ENCODE measurements at regions of chr13 and their contacts with region 1.

Region 1: GRCh38 chr13:43085545-43085944 is 62.2 kb downstream of the DNAJC15 start:
- DNase-seq: peak; percentile 67
- ATAC-seq: peak; percentile 49; the same call in 1 of the 2 replicates
- H3K4me3 ChIP-seq: no peak overlapping the region
- H3K27ac ChIP-seq: no peak overlapping the region
- H3K4me1 ChIP-seq: peaks cover 5% of the 10 kb centered on the region; the same call in 1 of the 2 replicates
- H3K27me3 ChIP-seq: no peaks in the 10 kb centered on the region
- CTCF ChIP-seq: peak; percentile 62

Region 2: GRCh38 chr13:42660333-42660965 is 425.1 kb before region 1 on chr13:
- CTCF ChIA-PET with region 1: no interaction called
- POLR2A ChIA-PET with region 1: no interaction called
- intact Hi-C with region 1: loop called (anchors 10 kb)
- DNase-seq: peak; percentile 26
- ATAC-seq: peak; percentile 50; the same call in 1 of the 2 replicates
- H3K4me3 ChIP-seq: no peak overlapping the region
- H3K27ac ChIP-seq: no peak overlapping the region
- H3K4me1 ChIP-seq: no peaks in the 10 kb centered on the region
- H3K27me3 ChIP-seq: no peaks in the 10 kb centered on the region
- CTCF ChIP-seq: peak; percentile 57

Region 3: DNA sequence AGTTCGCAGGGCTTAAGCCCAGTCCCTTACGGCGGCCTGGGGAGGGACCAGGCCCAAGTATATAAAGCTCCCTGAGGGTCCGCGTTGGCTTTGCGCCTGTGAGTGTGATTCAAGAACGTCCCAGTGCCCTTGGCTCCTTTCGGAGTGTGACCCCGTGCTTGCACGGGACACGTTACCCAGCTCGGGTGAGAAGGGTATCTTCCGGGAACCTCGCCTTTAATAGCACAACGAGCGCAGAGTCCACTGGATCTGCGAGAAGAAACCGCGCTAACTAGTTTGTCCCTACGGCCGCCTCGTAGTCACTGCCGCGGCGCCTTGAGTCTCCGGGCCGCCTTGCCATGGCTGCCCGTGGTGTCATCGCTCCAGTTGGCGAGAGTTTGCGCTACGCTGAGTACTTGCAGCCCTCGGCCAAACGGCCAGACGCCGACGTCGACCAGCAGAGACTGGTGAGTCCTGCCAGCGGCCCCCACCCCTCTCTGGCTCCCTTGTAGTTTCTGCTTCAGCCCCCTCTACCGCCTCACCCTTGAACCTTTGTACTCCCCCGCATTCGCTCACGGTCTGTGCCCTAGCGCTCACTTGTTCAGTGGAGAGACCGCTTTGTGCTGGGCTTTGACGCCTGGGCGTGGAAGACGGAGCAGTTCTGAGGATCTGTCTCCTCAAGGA is 62.1 kb before region 1 on chr13 and contains the start of gene DNAJC15:
- CTCF ChIA-PET with region 1: no interaction called
- POLR2A ChIA-PET with region 1: no interaction called
- intact Hi-C with region 1: no loop called
- DNase-seq: peak; percentile 58
- ATAC-seq: peak; percentile 39
- H3K4me3 ChIP-seq: peak within 1 kb of the TSS; percentile 76
- H3K27ac ChIP-seq: peak within 1 kb of the TSS; percentile 30; the same call in 1 of the 2 replicates
- H3K4me1 ChIP-seq: peaks cover 11% of the 10 kb centered on the region
- H3K27me3 ChIP-seq: no peaks in the 10 kb centered on the region
- CTCF ChIP-seq: no peak
- total RNA-seq, gene DNAJC15: 1.9 and 12.5 TPM in 2 replicates

Region 4: DNA sequence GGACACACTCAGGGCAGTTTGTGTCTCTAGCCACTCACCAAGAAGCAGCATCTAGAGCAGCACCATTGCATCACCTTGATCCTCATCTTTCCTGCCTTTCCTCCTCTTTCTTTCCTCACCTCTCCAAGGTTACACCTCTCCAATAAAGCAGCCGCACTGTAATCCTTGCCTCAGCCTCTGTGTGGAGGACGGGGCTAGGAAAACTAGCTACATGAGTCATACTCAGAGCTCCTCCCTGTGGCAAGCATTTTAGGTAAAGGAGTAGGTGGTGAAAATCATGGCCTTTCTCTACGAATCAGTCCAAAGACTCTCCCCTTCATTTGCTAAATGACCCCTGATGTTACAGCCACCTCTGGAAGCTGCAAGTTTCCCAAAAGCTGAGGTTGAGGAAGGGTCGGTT is 46.7 kb after region 1 on chr13:
- CTCF ChIA-PET with region 1: interaction called, 6 read pairs
- POLR2A ChIA-PET with region 1: no interaction called
- intact Hi-C with region 1: loop called (anchors 2 kb)
- DNase-seq: peak; percentile 73
- ATAC-seq: peak; percentile 98
- H3K4me3 ChIP-seq: no peak overlapping the region
- H3K27ac ChIP-seq: no peak overlapping the region
- H3K4me1 ChIP-seq: peaks cover 10% of the 10 kb centered on the region; the same call in 1 of the 2 replicates
- H3K27me3 ChIP-seq: no peaks in the 10 kb centered on the region
- CTCF ChIP-seq: peak; percentile 60

Region 5: GRCh38 chr13:43572656-43573367 is 487.3 kb after region 1 on chr13:
- CTCF ChIA-PET with region 1: no interaction called
- POLR2A ChIA-PET with region 1: no interaction called
- intact Hi-C with region 1: loop called (anchors 10 kb)
- DNase-seq: peak; percentile 62
- ATAC-seq: no peak
- H3K4me3 ChIP-seq: peak overlapping the region; percentile 18; the same call in 1 of the 2 replicates
- H3K27ac ChIP-seq: 0 out of 2 replicates have a peak overlapping the region, but pooled peaks have one; percentile 8
- H3K4me1 ChIP-seq: peaks cover 26% of the 10 kb centered on the region
- H3K27me3 ChIP-seq: no peaks in the 10 kb centered on the region
- CTCF ChIP-seq: no peak

Region 6: DNA sequence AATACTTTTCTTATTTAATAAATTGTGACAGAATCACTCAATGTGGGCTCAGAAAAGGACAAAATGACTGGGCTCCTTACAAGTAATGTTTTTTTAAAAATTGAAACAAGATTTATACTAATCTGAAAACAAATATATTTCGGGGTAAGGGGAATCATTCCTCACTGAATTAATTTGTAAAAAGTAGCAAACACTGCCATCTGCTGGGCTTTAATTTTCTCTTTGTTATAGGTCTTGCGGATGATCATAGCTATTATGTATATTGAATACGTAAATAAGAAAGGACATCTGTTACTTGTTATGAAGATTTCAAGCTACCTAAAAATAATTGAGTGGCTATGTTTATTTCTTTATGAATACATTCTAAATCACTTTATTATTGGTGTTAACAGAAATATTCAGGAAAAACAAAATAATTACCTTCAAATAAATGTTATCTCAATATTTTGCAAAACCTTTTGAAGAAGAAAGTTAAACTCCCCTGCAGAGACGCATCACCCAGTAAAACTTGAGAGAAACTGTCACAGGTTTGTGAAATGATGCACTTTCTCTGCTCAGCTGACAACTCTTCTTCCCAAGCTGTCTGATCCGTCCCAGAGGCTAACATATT is 719.0 kb after region 1 on chr13:
- CTCF ChIA-PET with region 1: interaction called, 3 read pairs
- POLR2A ChIA-PET with region 1: no interaction called
- intact Hi-C with region 1: loop called (anchors 1 kb)
- DNase-seq: peak; percentile 82
- ATAC-seq: peak; percentile 66
- H3K4me3 ChIP-seq: peak overlapping the region; percentile 63
- H3K27ac ChIP-seq: peak overlapping the region; percentile 95
- H3K4me1 ChIP-seq: peaks cover 29% of the 10 kb centered on the region
- H3K27me3 ChIP-seq: no peaks in the 10 kb centered on the region
- CTCF ChIP-seq: peak; percentile 63